Ascending aorta (tissue), 2 donors: ENCODE measurements at regions of chr13 and their contacts with region 1.

Region 1: GRCh38 chr13:114065141-114065925 is 67.1 kb downstream of the RASA3 start:
- DNase-seq: peak; percentile 79 to 95
- H3K4me3 ChIP-seq: peak overlapping the region; percentile 44 to 62
- H3K27ac ChIP-seq: peak overlapping the region; percentile 98 to 99
- H3K4me1 ChIP-seq: peaks cover 40 to 64% of the 10 kb centered on the region in 2 donors
- H3K27me3 ChIP-seq: no peaks in the 10 kb centered on the region
- CTCF ChIP-seq: no peak

Region 2: DNA sequence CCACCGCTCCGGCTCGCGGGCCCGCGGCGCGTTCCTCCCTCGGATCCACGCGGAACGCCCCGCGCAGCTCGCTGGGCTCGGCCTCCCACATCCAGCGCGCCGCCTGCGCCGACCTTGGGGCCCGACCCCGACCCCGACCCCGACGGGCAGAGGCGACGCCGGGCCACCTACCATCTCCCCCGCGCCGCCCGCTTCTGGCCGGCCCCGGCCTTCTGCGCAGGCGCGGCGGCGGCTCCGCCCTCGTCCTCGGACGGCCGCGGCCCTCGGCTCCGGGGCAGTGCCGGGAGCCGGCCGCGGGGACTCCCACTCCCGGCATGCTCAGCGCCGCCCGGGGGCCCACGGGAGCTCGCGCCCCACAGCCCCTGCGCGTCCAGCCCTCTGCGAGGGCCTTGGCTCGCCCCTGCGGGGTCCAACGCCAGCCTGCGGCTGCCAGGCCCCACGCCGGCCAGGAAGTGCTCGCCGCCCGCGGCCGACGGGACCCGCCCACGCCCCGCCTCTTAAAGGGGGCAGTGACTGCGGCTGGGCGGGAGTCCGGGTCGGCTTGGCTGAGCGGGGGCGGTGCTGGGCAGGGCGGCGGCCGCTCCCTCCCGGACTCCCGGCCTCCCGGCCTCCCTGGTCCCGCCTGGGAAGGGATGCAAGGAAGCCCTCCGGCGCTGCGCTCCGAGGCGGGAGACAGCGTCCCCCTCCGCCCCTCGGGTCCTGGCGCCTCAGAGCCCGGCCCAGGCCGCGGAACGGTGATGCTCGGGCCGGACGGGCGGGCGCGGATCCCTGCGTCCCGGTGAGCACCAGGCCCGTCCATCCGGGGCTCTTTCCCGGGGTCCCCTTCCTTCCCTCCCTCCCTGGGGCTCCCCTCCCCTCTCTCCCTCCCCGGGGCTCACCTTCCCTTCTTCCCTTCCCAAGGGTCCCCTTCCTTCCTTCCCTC is 574.6 kb before region 1 on chr13 and contains the start of gene DCUN1D2:
- intact Hi-C with region 1: loop called (anchors 2 kb)
- DNase-seq: peak; percentile 80 to 97
- H3K4me3 ChIP-seq: peak within 1 kb of the TSS; percentile 98 to 99
- H3K27ac ChIP-seq: peak within 1 kb of the TSS; percentile 88 to 95
- H3K4me1 ChIP-seq: peaks cover 23 to 48% of the 10 kb centered on the region in 2 donors
- H3K27me3 ChIP-seq: no peaks in the 10 kb centered on the region
- CTCF ChIP-seq: no peak
- total RNA-seq, gene DCUN1D2: 5.9 TPM

Region 3: GRCh38 chr13:114032177-114032799 is 33.0 kb before region 1 on chr13:
- intact Hi-C with region 1: loop called (anchors 2 kb)
- DNase-seq: no peak
- H3K4me3 ChIP-seq: no peak overlapping the region
- H3K27ac ChIP-seq: peak overlapping the region; percentile 61 to 84
- H3K4me1 ChIP-seq: peaks cover 5 to 20% of the 10 kb centered on the region in 2 donors
- H3K27me3 ChIP-seq: no peaks in the 10 kb centered on the region
- CTCF ChIP-seq: no peak

Region 4: DNA sequence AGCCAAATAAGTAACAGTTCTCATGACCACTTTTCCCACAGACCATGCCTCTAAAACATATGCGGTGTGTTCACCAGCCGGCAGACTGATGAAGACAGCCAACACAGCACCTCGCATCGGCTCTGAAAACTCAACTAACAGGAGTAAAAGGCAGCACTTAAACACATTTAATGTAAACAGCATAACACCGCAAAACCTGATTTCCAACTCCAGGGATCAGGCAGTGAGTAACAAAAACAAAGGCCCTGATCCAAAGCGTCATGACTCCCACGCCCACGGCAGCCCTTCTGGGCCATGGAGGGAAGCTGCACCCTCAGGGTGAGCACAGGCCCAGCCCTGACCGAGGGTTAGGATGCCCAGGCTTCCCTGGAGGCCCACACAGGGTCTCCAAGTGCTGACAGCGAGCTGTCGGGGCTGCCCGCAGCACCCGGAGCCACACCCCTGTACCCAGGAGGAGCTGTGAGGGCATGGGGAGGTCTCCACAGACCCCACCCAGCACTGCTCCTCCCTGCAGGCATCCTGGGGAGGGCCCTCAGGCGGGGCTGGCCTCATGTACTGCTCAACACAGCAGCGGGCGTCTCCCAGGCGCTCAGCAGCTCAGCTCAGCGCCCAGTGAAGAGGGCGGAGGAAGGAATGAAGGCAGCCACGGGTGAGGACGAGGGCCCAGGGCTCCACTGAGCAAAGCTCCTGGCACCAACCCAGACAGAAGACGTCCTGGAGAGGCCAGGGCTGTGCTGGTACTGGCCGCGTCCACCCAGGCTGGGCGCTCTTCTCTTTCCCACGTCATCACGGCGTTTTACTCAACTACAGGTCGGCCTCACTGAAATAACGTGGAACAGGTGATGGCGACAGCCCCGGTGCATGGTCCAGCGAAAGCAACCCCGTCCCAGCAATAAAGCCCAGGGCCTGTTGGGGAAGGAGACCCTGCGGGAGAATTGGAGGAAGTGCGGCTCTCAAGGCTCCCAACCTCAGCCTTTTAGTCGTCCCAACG is 13.4 kb after region 1 on chr13:
- intact Hi-C with region 1: no loop called
- DNase-seq: peak in 1 of 2 donors; percentile 69
- H3K4me3 ChIP-seq: no peak overlapping the region
- H3K27ac ChIP-seq: peak overlapping the region; percentile 31 to 64
- H3K4me1 ChIP-seq: peaks cover 0 to 5% of the 10 kb centered on the region in 2 donors
- H3K27me3 ChIP-seq: no peaks in the 10 kb centered on the region
- CTCF ChIP-seq: no peak

Region 5: DNA sequence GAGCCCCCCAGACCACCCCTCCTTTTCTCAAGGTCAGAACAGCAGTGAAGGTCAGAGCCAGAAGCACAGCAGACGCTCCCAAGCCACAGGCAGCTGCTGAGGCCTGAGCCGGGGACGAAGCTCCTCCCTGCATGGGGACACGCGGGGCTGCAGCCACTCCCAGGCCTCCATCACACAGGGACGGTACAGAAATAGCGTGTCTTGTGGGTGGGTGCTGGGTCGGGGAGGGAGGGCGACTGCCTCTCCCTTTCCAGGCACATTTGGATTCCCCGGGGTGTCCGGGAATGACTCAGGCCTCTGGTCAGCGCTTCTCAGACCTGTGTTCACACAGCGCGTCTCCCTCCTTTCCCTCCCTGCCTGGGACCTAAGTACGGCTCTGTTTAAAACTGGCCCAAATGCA is 33.9 kb after region 1 on chr13:
- intact Hi-C with region 1: loop called (anchors 1 kb)
- DNase-seq: peak; percentile 79 to 94
- H3K4me3 ChIP-seq: peak overlapping the region in 1 of 2 donors; percentile 25
- H3K27ac ChIP-seq: peak overlapping the region; percentile 43 to 70
- H3K4me1 ChIP-seq: peaks cover 10 to 24% of the 10 kb centered on the region in 2 donors
- H3K27me3 ChIP-seq: no peaks in the 10 kb centered on the region
- CTCF ChIP-seq: no peak

Region 6: DNA sequence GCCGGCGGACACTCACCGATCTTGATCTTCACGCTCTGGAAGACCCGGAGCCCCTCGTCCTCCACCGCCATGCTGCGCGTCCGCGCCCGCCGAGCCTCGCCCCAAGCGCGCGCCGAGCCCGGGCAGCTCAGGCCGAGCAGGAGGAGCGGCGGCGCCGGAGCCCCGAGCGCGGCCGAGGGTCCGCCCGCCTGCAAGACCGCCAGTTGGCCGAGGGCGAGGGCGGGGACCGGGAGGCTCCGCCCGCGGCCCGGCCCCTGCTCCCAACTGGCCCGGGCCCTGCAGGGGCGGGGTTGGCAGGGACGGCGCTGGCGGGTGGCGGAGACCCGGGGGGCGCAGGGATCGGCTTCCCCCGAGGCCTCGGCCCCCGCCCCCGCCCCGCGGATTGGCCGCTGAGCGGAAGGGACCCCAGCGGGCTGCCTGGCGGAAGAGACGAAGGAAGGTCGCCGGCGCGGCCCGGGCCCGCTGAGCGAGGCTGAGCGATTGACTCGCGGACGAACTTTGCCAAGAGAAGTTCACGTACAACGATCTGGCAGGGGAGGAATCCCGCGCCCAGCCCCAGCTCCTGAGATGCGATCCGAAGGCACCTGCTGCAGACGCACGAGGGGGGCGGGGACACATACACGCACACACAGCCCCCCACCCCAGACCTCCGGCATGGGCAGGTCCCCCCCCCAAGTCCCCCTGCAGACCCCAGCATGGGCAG is 67.2 kb after region 1 on chr13 and contains the start of gene RASA3:
- intact Hi-C with region 1: loop called (anchors 1 kb)
- DNase-seq: peak in 1 of 2 donors; percentile 88
- H3K4me3 ChIP-seq: peak within 1 kb of the TSS; percentile 72 to 96
- H3K27ac ChIP-seq: peak within 1 kb of the TSS; percentile 83 to 88
- H3K4me1 ChIP-seq: peaks cover 14 to 25% of the 10 kb centered on the region in 2 donors
- H3K27me3 ChIP-seq: no peaks in the 10 kb centered on the region
- CTCF ChIP-seq: no peak
- total RNA-seq, gene RASA3: 30.7 TPM

Region 7: DNA sequence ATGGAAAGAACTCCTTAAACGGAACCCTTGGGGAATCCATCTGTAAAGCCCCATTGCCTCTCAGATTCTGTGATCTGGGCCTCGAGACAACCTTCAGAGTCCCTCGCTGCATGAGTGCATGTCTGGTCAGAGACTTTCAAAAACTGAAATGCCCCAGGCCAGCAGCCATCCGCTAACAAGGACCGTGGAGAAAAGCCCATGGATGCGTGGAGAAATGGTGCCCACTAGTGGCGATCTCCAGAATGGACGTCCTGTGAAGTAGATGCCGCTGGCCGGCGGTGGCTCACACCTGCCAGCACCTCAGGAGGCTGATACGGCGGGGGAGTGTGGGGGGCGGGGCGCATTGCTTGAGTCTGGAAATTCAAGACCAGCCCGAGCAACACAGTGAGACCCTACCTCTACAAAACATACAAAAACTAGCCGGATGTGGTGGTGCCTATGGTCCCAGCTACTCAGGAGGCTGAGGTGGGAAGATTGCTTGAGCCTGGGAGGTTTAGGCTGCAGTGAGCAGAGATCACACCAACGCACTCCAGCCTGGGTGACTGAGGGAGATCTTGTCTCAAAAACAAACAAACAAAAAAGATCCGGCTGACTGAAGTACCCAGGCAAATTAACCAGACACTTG is 161.5 kb after region 1 on chr13:
- intact Hi-C with region 1: loop called (anchors 2 kb)
- DNase-seq: peak; percentile 33 to 93
- H3K4me3 ChIP-seq: no peak overlapping the region
- H3K27ac ChIP-seq: no peak overlapping the region
- H3K4me1 ChIP-seq: no peaks in the 10 kb centered on the region
- H3K27me3 ChIP-seq: no peaks in the 10 kb centered on the region
- CTCF ChIP-seq: peak; percentile 98